Ascending aorta (tissue), 2 donors: ENCODE measurements at regions of chr6 and their contacts with region 1.

Region 1: DNA sequence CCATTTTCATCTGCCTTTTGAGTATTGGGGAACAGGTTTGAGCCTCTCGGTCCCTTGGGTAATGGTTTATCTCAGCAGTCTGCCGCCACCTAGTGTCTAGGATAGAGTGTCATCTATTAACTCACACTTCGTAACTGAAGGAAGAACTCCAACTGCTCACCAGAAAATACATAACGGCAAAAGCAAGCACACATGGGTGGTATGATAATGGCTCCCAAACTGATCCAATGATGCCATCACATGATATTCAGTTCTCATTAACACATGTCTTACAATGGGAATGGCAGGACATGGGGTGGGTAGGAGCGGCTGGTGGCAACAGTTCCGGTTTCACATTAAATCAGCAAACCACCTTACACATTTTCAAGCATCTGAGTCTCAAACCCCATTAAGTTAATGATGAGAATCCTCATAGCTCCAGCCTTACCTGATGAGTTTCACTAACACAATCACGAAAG is 110.7 kb upstream of the PHACTR1 start:
- DNase-seq: no peak
- H3K4me3 ChIP-seq: no peak overlapping the region
- H3K27ac ChIP-seq: no peak overlapping the region
- H3K4me1 ChIP-seq: peaks cover 0 to 19% of the 10 kb centered on the region in 2 donors
- H3K27me3 ChIP-seq: no peaks in the 10 kb centered on the region
- CTCF ChIP-seq: peak in 2 of 3 experiments; percentile 44 to 64

Region 2: DNA sequence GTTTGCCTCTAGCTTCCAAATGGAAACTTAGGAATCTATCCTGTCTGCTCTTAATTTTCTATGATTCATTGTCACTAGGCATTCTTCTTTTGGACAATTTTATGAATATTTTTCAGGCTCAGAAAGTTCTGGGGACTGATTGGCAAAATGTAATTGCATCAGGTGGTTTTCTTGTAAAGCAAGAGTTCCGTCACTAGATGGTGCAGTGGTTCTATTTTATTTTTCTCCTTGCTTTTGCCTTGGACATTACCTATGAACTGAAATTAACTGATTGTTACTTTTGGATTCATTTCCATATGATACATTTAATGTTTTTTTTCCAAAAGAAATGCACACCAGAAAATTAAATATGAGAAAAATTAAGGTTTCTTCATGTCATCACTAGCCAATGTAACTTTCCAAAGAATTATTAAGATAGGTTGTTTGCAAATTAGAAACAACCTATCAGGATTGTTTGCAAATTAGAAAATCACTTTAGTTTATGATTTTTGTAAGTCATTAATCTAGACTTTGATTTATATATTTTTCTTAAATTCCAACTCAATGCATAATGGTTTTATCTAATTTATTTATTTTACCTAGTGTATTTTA is 1020.4 kb before region 1 on chr6:
- intact Hi-C with region 1: loop called (anchors 1 kb)
- DNase-seq: no peak
- H3K4me3 ChIP-seq: no peak overlapping the region
- H3K27ac ChIP-seq: no peak overlapping the region
- H3K4me1 ChIP-seq: peaks cover 0 to 21% of the 10 kb centered on the region in 2 donors
- H3K27me3 ChIP-seq: no peaks in the 10 kb centered on the region
- CTCF ChIP-seq: peak; percentile 52 to 68 (median 58)

Region 3: GRCh38 chr6:12233693-12234571 is 372.0 kb before region 1 on chr6:
- intact Hi-C with region 1: loop called (anchors 5 kb)
- DNase-seq: peak in 1 of 2 donors; percentile 68
- H3K4me3 ChIP-seq: no peak overlapping the region
- H3K27ac ChIP-seq: peak overlapping the region in 1 of 2 donors; percentile 23
- H3K4me1 ChIP-seq: peaks cover 0 to 2% of the 10 kb centered on the region in 2 donors
- H3K27me3 ChIP-seq: no peaks in the 10 kb centered on the region
- CTCF ChIP-seq: peak; percentile 76 to 86 (median 85)

Region 4: GRCh38 chr6:12313992-12314805 is 291.7 kb before region 1 on chr6:
- intact Hi-C with region 1: loop called (anchors 2 kb)
- DNase-seq: no peak
- H3K4me3 ChIP-seq: peak overlapping the region in 1 of 2 donors; percentile 38
- H3K27ac ChIP-seq: peak overlapping the region; percentile 71 to 74
- H3K4me1 ChIP-seq: peaks cover 0 to 5% of the 10 kb centered on the region in 2 donors
- H3K27me3 ChIP-seq: no peaks in the 10 kb centered on the region
- CTCF ChIP-seq: no peak

Region 5: GRCh38 chr6:12472601-12473038 is 133.3 kb before region 1 on chr6:
- intact Hi-C with region 1: loop called (anchors 10 kb)
- DNase-seq: peak; percentile 58 to 94
- H3K4me3 ChIP-seq: no peak overlapping the region
- H3K27ac ChIP-seq: peak overlapping the region; percentile 79 to 85
- H3K4me1 ChIP-seq: peaks cover 9 to 30% of the 10 kb centered on the region in 2 donors
- H3K27me3 ChIP-seq: no peaks in the 10 kb centered on the region
- CTCF ChIP-seq: no peak

Region 6: DNA sequence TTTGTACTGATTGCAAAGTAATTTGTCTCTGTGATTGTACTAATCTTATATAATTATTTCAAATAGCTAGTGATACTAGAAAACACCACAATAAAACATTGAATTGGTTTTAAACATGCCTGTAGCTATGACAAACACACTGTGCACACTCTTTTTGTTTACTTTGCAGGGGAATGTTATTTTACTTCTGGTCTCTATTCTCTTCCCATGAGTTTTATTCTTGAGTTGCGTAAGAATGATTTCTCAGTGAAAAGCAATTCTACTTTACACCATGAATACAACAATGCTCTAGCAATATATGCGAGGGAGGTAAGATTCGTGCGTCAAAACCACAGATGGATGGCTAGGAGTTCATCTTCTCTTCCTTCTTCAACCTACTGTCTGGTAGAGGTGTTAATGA is 42.3 kb after region 1 on chr6:
- intact Hi-C with region 1: no loop called
- DNase-seq: no peak
- H3K4me3 ChIP-seq: no peak overlapping the region
- H3K27ac ChIP-seq: no peak overlapping the region
- H3K4me1 ChIP-seq: no peaks in the 10 kb centered on the region
- H3K27me3 ChIP-seq: no peaks in the 10 kb centered on the region
- CTCF ChIP-seq: no peak

Region 7: DNA sequence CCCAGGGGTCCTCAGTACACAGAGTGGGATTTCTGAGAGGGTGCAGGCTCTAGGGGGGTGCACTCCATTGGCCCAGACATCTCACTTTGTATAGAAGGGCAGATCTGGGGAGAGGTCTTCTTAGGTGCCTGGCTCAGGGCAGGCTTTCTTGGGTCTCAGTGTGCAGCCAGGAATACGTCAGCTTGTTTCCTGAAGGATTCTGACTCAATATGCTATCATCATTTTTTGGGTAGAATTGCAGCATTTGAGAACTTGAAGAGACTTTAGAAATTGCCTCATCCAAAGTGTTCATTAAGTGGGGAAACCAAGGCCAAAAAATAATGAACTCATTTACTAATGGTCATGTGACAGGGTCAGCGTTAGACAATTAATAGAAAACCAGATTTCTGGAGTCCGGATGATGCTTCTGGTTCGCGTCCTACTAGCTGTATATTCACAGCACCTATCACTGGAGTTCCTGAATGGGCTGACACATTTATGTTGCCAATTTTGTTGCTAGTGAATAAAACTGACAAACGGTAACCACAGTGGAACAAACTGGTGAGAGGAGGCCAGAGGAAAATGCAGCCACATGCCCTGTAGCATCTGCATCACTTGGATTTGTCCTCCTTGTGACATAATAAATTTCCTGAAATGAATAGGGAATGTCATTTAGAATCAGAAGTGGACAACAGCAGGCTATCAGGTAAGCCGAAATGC is 483.5 kb after region 1 on chr6:
- intact Hi-C with region 1: no loop called
- DNase-seq: no peak
- H3K4me3 ChIP-seq: no peak overlapping the region
- H3K27ac ChIP-seq: peak overlapping the region; percentile 50 to 62
- H3K4me1 ChIP-seq: peaks cover 2 to 17% of the 10 kb centered on the region in 2 donors
- H3K27me3 ChIP-seq: no peaks in the 10 kb centered on the region
- CTCF ChIP-seq: no peak